ENCODE measurements at regions of chr12 and their contacts with region 1.

Region 1: DNA sequence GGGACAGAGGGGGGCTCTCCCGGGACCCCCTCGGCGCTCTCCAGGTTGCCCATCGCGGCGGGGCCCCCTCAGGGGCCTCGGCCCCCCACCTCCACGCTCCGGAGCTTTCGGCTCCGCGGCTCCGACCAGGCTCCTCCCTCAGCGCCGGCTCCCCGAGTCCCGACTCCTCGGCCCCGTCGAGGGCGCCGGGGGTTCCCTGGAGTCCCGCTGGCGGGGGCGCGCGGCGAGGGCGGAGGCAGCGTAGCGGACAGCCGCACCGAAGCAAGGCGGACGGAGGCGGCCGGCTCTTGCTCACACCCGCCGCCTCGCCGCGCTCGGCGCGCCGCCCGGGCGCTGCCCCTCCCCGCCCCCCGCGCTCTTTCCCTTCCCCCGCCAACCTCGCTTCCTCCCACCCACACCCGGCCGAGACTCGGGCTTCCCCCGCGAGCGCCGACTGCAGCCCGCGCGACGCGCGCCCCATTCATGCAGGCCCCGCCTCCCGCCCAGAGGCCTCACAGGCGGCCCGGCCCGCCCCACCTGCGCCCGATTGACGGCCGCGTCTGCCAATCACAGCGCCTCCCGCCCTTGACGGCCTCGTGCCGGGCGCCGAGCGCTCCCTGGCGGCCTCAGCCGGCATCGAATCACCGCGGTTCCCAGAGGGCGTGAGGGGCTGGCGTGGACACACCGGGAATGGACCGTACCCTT is at the start of gene FMNL3:
- DNase-seq: peak; percentile 98
- H3K4me3 Mint-ChIP-seq: peak within 1 kb of the TSS; percentile 92
- H3K27ac Mint-ChIP-seq: peak within 1 kb of the TSS; percentile 66
- H3K4me1 Mint-ChIP-seq: peaks cover 43% of the 10 kb centered on the region
- H3K27me3 Mint-ChIP-seq: peaks cover 44% of the 10 kb centered on the region

Region 2: GRCh38 chr12:49662998-49663843 is 44.0 kb before region 1 on chr12:
- CTCF ChIA-PET with region 1: interaction called, 13 read pairs
- DNase-seq: peak; percentile 85
- H3K4me3 Mint-ChIP-seq: peak overlapping the region; percentile 60
- H3K27ac Mint-ChIP-seq: peak overlapping the region; percentile 96
- H3K4me1 Mint-ChIP-seq: peaks cover 74% of the 10 kb centered on the region
- H3K27me3 Mint-ChIP-seq: no peaks in the 10 kb centered on the region

Region 3: GRCh38 chr12:49673446-49674317 is 33.6 kb before region 1 on chr12:
- CTCF ChIA-PET with region 1: interaction called, 11 read pairs
- DNase-seq: no peak
- H3K4me3 Mint-ChIP-seq: no peak overlapping the region
- H3K27ac Mint-ChIP-seq: peak overlapping the region; percentile 68
- H3K4me1 Mint-ChIP-seq: peaks cover 75% of the 10 kb centered on the region
- H3K27me3 Mint-ChIP-seq: no peaks in the 10 kb centered on the region